ENCODE measurements at regions of chr6 and their contacts with region 1.

Region 1: DNA sequence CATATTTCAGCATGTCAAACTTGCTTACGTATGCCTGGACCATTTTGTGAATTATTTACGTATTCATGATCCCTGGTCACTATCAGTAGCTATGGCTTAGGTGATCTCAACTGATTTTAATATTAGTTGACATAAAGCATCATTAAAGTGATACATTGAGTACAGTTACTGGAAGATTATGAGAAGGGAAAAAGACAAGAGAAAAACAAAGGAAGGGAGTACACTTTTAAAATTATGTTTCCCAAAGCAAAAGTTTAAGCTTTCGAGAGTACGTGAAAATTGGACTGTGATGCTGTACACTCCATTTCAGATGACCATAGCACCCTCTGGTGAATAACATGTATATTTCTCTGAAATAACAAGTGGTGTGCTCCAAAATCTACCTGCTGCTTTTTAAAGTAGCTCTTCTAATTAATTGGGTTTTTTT is 215.0 kb upstream of the HSF2 start:
- DNase-seq: no peak
- H3K4me3 ChIP-seq: peak overlapping the region; percentile 39 to 50
- H3K27ac ChIP-seq: no peak overlapping the region
- H3K4me1 ChIP-seq: no peaks in the 10 kb centered on the region
- H3K27me3 ChIP-seq: no peaks in the 10 kb centered on the region
- CTCF ChIP-seq: peak; percentile 27 to 55 (median 36)

Region 2: DNA sequence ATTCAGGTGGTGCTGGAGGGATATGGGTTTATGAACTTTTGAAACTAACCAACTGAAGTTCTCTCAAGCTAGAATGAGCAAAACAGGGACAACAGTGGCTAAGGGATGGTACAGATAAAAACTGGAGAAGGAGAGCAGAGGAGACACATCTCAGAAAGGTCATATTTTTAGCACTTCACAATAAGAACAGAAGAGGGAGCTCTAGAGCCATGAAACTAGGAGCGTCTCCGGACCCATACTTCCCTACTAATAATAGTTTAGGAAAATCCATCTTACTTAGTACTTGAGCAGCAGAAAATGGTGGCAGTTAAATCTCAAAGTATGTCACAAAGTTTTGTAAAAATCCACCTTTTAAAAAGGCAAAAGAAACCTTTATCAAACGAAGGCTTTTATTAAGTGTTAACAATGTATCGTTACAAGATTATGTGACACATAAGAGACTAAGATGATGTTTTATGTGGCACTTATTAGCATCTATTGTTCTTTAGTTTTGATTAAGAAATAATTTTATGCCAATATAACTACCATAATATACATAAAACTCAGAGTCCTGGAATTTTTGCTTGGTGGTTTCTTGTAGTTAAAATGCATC is 1128.7 kb before region 1 on chr6:
- intact Hi-C with region 1: loop called (anchors 10 kb)
- DNase-seq: no peak
- H3K4me3 ChIP-seq: no peak overlapping the region
- H3K27ac ChIP-seq: no peak overlapping the region
- H3K4me1 ChIP-seq: no peaks in the 10 kb centered on the region
- H3K27me3 ChIP-seq: no peaks in the 10 kb centered on the region
- CTCF ChIP-seq: peak; percentile 12 to 59 (median 47)

Region 3: DNA sequence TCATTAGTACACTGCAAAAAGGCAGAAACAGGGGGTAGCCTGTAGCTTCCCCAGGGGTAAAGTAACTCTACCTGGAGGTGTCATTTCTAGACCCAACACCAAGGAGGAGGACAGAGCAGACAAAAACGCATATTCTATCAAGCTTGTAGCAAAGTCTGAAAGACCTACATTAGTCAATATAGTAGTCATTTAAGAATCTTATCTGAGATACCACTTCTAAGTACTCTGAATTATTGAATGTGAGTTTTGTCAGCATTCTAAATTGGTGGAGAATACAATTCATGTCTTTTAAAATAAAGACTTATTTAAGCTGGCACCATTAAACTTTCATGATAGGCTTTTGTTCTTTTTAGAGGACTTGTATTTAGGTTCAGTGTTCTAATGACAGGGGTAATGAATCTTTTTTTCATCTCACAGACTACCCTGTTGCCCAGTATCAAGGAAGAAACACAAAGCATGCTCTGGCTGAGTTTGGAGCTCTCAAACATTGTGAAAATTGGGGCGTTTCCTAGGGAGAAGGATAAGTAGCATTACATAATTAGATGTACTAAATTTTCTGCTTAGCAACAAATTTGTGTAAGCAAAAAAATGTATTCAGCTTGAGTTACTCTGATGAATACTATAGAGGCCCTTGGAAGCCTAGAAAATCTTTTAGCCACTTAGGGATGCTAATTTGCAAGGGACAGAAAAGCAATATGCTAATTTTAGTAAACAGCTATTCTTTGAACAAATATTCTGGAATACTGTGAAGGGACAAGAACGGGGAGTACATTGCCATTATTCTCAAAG is 40.4 kb before region 1 on chr6:
- intact Hi-C with region 1: no loop called
- DNase-seq: no peak
- H3K4me3 ChIP-seq: no peak overlapping the region
- H3K27ac ChIP-seq: no peak overlapping the region
- H3K4me1 ChIP-seq: no peaks in the 10 kb centered on the region
- H3K27me3 ChIP-seq: no peaks in the 10 kb centered on the region
- CTCF ChIP-seq: no peak